Activated naive CD4-positive, alpha-beta T cell treated with anti-CD3 and anti-CD28 coated beads for 36 hours (primary cell): ENCODE measurements at regions of chr19 and their contacts with region 1.

Region 1: DNA sequence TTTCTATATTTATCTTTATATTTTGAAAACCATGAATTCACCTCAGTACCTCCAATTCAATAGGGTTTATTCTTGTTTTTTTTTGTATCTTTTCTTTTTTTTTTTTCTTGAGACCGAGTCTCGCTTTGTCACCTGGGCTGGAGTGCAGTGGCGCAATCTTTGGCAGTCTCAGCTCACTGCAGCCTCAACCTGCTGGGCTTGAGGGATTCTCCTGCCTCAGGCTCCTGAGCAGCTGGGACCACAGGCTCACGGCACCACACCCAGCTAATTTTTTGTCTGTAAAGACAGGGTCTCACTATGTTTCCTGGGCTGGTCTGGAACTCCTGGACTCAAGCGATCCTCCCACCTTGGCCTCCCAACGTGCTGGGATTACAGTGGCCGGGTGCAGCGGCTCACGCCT is 23.1 kb upstream of the EVI5L start:
- DNase-seq: no peak
- H3K4me3 Mint-ChIP-seq: no peak overlapping the region
- H3K27ac Mint-ChIP-seq: no peak overlapping the region
- H3K4me1 Mint-ChIP-seq: peaks cover 12% of the 10 kb centered on the region
- H3K27me3 Mint-ChIP-seq: peaks cover 24% of the 10 kb centered on the region

Region 2: DNA sequence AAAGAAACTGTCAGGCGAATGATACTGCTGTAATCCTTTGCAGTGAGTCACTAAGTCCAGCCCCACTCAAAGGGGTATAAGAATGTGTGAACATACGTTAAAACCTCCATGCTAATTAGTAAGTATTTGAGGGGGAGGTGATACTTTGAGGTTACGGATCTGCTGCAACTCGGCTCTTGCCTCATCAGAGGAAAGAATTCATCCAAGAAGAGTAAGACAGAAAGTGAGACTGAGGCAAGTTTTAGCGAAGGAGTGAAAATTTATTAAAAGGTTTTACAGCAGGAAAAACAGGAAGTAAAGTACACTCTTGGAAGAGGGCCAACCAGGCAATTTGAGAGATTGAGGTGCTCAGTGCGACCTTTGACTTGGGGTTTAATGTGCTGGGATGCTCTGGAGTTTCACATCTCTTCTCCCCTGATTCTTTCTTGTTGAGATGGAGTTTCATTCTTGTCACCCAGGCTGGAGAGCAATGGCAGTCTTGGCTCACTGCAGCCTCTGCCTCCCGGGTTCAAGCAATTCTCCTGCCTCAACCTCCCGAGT is 34.1 kb before region 1 on chr19:
- CTCF ChIA-PET with region 1: no interaction called
- intact Hi-C with region 1: loop called (anchors 1 kb)
- DNase-seq: peak; percentile 71
- H3K4me3 Mint-ChIP-seq: no peak overlapping the region
- H3K27ac Mint-ChIP-seq: peak overlapping the region; percentile 77
- H3K4me1 Mint-ChIP-seq: peaks cover 27% of the 10 kb centered on the region
- H3K27me3 Mint-ChIP-seq: peaks cover 4% of the 10 kb centered on the region

Region 3: DNA sequence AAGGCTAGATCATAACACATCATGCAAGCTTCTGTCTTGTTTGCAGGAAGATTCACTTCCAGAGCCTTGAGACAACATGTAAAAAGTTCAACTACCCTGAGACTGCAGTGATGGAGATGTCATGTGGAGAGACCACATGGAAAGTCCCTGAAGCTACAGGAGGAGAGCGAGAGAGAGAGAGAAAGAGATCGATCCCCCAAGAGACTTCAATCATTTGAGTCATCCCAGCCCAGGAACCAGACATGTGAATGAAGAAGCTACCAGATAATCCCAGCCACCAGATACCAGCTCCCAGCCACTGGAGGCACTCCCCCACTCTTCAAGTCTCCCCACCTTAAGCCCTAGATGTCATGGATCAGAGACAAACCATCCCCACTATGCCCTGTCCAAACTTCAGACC is 12.5 kb after region 1 on chr19:
- CTCF ChIA-PET with region 1: no interaction called
- intact Hi-C with region 1: loop called (anchors 1 kb)
- DNase-seq: no peak
- H3K4me3 Mint-ChIP-seq: no peak overlapping the region
- H3K27ac Mint-ChIP-seq: no peak overlapping the region
- H3K4me1 Mint-ChIP-seq: peaks cover 15% of the 10 kb centered on the region
- H3K27me3 Mint-ChIP-seq: peaks cover 27% of the 10 kb centered on the region